ENCODE measurements at regions of chr5 and their contacts with region 1.

Region 1: DNA sequence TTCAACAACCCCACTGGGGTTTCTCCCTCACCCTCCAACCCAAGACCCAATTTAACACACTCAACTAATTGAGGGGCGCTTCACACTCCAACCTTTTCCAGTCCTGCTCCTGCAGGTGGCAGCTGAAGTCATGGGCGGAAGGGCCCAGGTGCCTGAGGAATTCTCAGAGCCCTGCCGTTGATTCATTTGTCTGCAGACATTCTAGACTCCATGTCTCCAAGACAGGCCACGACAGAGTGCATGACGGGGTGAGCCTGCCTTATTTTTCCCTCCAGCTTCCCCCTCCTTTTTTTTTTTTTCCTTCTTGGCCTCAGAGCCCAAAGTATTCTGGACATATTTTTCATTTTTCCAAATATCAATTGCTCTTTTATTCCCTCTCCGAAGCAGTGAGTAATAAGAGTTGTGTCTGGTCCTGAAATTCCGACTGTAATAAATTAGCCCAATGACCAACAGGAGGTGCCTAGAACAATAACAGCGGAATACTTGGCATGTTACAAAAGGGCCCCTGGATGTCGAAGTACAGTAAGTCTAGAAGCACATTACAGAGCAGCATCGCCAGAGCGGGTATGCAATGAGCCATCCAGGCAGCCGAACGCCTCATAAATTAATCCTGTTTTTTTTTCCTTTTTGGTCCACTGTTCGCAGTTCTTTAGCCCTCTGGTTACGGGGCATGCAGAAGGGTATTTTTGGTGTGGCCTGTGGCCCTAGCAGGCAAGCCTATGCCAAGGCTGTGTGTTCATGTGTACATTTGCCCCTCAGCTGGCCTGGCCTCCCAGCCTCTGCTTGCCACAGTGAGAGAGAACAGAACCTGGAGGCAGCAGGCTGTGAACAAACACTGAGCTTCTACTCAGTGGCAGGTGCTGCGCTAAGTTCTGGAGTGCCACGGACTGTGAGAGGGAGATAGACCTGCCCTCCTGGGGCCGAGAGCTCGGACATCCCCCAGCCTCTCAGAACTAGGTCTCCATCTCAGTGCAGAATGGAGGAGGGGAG is 8.6 kb upstream of the SMIM23 start:
- DNase-seq: no peak
- ATAC-seq: 0 out of 2 replicates have a peak, but pooled peaks have one; percentile 24
- H3K4me3 Mint-ChIP-seq: no peak overlapping the region
- H3K27ac Mint-ChIP-seq: no peak overlapping the region
- H3K4me1 Mint-ChIP-seq: no peaks in the 10 kb centered on the region; the same call in 1 of the 2 replicates
- H3K27me3 Mint-ChIP-seq: no peaks in the 10 kb centered on the region
- CTCF ChIP-seq: no peak

Region 2: GRCh38 chr5:171721464-171721863 is 55.6 kb before region 1 on chr5:
- CTCF ChIA-PET with region 1: no interaction called
- POLR2A ChIA-PET with region 1: no interaction called
- DNase-seq: no peak
- ATAC-seq: no peak
- H3K4me3 Mint-ChIP-seq: no peak overlapping the region
- H3K27ac Mint-ChIP-seq: no peak overlapping the region
- H3K4me1 Mint-ChIP-seq: peaks cover 25% of the 10 kb centered on the region
- H3K27me3 Mint-ChIP-seq: peaks cover 3% of the 10 kb centered on the region; the same call in 1 of the 2 replicates
- CTCF ChIP-seq: no peak

Region 3: GRCh38 chr5:171927345-171927941 is 150.4 kb after region 1 on chr5:
- CTCF ChIA-PET with region 1: no interaction called
- POLR2A ChIA-PET with region 1: no interaction called
- DNase-seq: no peak
- ATAC-seq: no peak
- H3K4me3 Mint-ChIP-seq: no peak overlapping the region
- H3K27ac Mint-ChIP-seq: no peak overlapping the region
- H3K4me1 Mint-ChIP-seq: peaks cover 47% of the 10 kb centered on the region
- H3K27me3 Mint-ChIP-seq: no peaks in the 10 kb centered on the region
- CTCF ChIP-seq: no peak

Region 4: GRCh38 chr5:172071289-172071875 is 294.3 kb after region 1 on chr5:
- CTCF ChIA-PET with region 1: no interaction called
- POLR2A ChIA-PET with region 1: interaction called, 10 read pairs
- DNase-seq: no peak
- ATAC-seq: peak; percentile 78
- H3K4me3 Mint-ChIP-seq: no peak overlapping the region
- H3K27ac Mint-ChIP-seq: 0 out of 2 replicates have a peak overlapping the region, but pooled peaks have one; percentile 26
- H3K4me1 Mint-ChIP-seq: peaks cover 6% of the 10 kb centered on the region
- H3K27me3 Mint-ChIP-seq: no peaks in the 10 kb centered on the region
- CTCF ChIP-seq: no peak

Measured in WTC11 (cell line).